ENCODE measurements at regions of chr9 and their contacts with region 1.

Region 1: GRCh38 chr9:10062629-10063395 is 550.0 kb downstream of the PTPRD start:
- DNase-seq: peak in 1 of 7 donors; percentile 8
- H3K4me3 ChIP-seq: no peak overlapping the region
- H3K27ac ChIP-seq: no peak overlapping the region
- H3K4me1 ChIP-seq: no peaks in the 10 kb centered on the region
- H3K27me3 ChIP-seq: no peaks in the 10 kb centered on the region
- CTCF ChIP-seq: no peak
- POLR2A ChIP-seq: no peak

Region 2: DNA sequence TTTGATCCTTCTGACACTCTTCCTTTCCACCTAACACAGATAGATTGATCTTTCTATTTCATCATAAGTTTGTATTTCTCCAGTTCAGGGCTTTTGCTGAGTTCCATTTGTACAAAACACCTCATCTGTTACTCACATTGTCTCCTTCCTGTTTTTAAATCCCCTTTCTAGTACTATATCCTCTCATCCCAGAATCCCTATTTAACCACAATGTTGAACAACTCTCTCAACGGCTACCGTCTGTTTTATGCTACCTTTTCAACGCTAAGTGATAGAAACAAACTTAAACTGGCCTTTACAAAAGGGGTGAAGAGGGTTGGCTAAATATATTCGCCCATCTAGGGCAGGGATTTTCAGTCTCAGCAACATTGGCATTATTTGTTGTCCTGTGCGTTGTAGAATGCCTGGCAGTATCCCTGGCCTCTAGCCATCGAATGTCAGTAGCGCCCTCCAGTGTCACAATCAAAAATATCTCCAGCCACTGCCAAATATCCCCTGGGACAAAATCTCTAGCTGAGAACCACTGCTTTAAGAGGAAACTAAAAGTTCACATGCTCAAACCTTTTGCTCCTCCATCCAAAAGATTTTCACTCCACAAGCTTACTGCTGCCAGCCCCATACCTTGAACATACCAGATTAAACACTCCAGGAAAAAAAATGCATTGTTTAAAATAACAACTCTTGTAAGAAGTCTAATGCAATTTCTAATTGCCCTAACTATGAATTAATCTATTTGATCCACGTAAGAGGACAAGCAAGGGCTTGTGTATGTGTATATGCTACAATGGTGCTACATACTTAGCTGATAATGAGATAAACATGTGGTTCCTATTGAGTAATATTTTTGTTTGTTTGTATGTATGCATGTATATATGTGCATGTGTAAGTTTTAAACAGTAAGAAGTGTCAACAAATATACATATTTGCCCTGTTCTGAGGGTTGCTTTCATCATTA is 206.0 kb after region 1 on chr9:
- intact Hi-C with region 1: loop called in 1 of 2 experiments (anchors 5 kb)
- DNase-seq: peak; percentile 36 to 73 (median 51)
- H3K4me3 ChIP-seq: no peak overlapping the region
- H3K27ac ChIP-seq: no peak overlapping the region
- H3K4me1 ChIP-seq: no peaks in the 10 kb centered on the region
- H3K27me3 ChIP-seq: no peaks in the 10 kb centered on the region
- CTCF ChIP-seq: peak; percentile 31 to 64 (median 56)
- POLR2A ChIP-seq: no peak

Region 3: DNA sequence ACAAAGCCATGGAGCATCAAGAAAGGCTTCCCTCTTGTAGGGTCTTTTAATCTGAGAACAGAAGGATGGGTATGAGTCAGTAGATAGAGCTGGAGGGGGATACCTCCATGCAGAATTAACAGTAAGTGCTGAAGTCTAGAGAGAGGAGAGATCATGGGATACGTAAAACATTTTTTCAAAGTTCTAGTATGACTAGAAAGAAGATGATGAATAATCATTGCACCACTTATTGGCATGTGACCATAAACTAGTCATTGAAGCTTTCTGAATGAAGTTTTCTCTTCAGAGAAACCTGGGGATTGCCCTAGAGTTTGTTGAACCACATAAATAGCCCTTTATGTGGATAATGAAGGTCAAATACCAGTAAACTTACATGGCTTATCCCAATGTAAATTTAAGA is 598.6 kb after region 1 on chr9:
- intact Hi-C with region 1: no loop called
- DNase-seq: no peak
- H3K4me3 ChIP-seq: no peak overlapping the region
- H3K27ac ChIP-seq: no peak overlapping the region
- H3K4me1 ChIP-seq: no peaks in the 10 kb centered on the region
- H3K27me3 ChIP-seq: no peaks in the 10 kb centered on the region
- CTCF ChIP-seq: no peak
- POLR2A ChIP-seq: no peak